ENCODE measurements at regions of chr3 and their contacts with region 1.

Region 1: GRCh38 chr3:10480871-10481378 is 24.5 kb downstream of the ATP2B2 start:
- DNase-seq: no peak
- ATAC-seq: no peak
- H3K4me3 ChIP-seq: no peak overlapping the region
- H3K27ac ChIP-seq: no peak overlapping the region
- H3K4me1 ChIP-seq: no peaks in the 10 kb centered on the region
- H3K27me3 ChIP-seq: no peaks in the 10 kb centered on the region
- CTCF ChIP-seq: no peak

Region 2: DNA sequence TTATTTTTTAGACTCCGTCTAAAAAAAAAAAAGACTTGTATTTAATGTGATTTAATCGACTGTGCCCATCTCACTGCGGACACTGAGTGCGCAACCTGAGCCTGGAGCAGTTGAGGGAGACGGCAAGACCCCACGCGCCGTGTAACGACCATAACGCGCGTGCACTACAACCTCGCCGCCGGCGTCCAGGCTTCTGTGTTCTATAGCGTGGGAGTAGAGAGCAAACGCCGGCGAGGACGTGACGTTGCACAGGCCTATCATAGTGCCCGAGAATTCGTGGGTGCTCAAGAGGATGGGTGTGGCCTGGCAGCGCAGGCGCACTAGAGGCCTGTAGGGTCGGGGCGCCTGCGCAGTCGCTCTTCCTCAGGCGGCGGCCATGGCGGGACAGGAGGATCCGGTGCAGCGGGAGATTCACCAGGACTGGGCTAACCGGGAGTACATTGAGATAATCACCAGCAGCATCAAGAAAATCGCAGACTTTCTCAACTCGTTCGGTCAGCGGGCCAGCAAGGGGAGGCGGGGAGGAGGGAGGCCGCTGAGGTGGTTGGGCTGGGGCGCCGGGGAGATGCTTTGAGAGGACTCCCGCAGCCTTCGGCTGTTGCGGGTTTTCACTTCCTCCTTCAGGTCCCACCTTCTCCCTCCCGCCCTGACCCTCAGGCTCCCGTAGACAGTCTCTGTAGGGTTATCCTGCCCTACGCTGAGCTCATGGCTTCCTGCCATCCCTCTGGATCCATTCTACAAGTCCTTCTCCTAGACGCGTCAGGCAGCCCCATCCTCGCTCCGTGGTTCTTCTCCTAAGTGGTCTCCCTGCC is 365.4 kb before region 1 on chr3 and contains the start of gene BRK1:
- CTCF ChIA-PET with region 1: no interaction called
- POLR2A ChIA-PET with region 1: interaction called, 13 read pairs
- in situ Hi-C with region 1: no loop called
- intact Hi-C with region 1: no loop called
- DNase-seq: peak; percentile 58
- ATAC-seq: peak; percentile 99
- H3K4me3 ChIP-seq: peak within 1 kb of the TSS; percentile 88 to 97
- H3K27ac ChIP-seq: peak within 1 kb of the TSS; percentile 89
- H3K4me1 ChIP-seq: peaks cover 3% of the 10 kb centered on the region; the same call in 1 of the 2 replicates
- H3K27me3 ChIP-seq: no peaks in the 10 kb centered on the region
- CTCF ChIP-seq: no peak
- total RNA-seq, gene BRK1: 81.9 TPM